ENCODE measurements at regions of chr16 and their contacts with region 1.

Region 1: DNA sequence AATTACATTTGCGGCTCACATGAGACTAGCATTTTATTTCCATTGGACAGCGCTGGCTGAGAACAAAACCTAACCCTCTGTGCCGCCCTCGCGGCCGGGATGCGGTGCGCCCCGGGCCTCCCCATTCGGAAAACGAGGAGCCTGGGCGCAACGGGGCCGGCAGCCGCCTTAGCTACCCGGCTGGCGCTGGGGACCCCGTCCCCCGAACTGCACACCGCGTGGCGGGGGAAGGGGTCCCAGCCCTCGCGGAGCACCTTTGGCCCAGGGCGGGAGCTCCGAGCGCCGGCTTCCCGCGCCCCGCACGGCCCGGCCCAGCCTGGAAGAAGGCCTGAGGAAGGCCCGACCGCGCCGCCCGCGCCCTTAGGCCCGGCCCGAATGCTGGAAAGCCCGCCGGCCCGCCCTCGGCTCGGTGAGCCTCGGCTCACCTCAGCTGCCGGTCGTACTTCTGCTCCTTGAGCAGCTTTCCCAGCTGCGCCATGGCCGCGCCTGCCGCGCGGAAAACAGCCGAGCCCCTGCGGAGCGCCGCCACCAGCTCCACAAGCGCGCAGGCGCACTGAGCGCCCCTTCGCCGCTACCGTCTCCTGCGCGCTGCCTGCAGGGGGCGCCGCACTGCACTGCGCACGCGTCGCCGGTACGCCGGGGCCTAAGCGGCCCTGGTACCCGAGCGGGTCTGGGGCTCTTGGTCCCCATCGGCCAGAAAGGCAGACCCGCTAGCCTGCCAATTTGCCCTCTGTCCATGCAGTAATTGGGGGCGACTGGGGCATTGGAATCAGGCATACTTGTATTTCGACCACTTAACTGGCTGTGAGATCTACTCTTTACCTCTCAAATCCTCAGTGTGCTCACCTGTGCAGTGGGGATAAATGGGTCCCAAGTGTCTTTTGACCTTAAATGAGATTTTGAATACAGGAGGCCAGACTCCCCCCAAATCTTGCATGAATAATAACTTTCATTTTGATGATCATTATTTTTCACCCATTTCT is at the start of gene NAE1:
- DNase-seq: peak; percentile 80 to 95 (median 90)
- ATAC-seq: peak; percentile 90 to 92
- H3K4me3 Mint-ChIP-seq: peak within 1 kb of the TSS; percentile 67 to 91 (median 79)
- H3K27ac Mint-ChIP-seq: peak within 1 kb of the TSS in 8 of 10 donors; percentile 47 to 88 (median 67)
- H3K4me1 Mint-ChIP-seq: peaks cover 17 to 34% (median 27%) of the 10 kb centered on the region in 4 donors
- H3K27me3 Mint-ChIP-seq: peaks cover 0 to 3% (median 0%) of the 10 kb centered on the region in 5 donors
- polyA plus RNA-seq, gene NAE1: 84.7 to 107 (median 95.7) TPM

Region 2: GRCh38 chr16:66869424-66869823 is 38.7 kb after region 1 on chr16:
- POLR2A ChIA-PET with region 1: interaction called, 25 read pairs
- DNase-seq: peak in 1 of 10 donors; percentile 21
- ATAC-seq: no peak
- H3K4me3 Mint-ChIP-seq: no peak overlapping the region
- H3K27ac Mint-ChIP-seq: no peak overlapping the region
- H3K4me1 Mint-ChIP-seq: peaks cover 11 to 22% (median 19%) of the 10 kb centered on the region in 4 donors
- H3K27me3 Mint-ChIP-seq: peaks cover 0 to 1% (median 0%) of the 10 kb centered on the region in 5 donors

Region 3: DNA sequence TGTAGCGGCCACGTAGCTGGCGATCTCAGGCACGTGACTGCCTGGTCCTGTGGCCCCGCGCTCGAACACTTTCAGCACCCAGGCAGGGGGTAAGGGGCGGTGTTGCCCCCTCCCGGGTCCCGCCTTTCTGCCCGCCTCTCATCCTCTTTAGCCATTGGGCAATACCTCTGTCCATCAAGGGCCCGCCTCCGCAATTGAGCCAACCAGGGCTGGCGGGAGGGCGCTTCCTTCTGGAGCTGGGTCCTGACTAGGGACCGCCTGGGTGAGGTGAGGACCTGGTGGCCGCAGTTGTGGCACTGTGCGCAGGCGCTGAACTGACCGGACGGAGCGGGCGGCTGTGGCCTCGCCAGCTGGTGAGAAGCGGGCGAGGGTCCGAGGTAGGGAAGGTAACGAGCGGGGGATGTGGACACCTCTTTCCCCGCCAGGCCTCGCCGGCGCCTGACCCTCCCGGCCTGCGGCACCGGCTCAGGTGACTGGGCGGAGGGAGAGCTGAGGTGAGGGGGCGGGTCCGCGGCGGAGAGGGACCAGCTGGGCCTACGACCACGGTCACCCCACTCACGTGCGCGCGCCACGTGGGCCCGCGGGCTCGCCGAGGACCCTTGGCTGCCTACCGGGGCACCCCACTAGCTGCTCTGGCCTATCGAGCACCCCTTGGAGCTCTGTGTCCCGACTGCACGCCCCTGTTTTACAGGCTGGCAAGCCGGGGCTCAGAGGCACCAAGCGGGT is 49.7 kb after region 1 on chr16 and contains the start of gene PDP2:
- POLR2A ChIA-PET with region 1: interaction called, 16 read pairs
- DNase-seq: peak; percentile 73 to 96 (median 88)
- ATAC-seq: peak; percentile 98
- H3K4me3 Mint-ChIP-seq: peak within 1 kb of the TSS; percentile 86 to 100 (median 99)
- H3K27ac Mint-ChIP-seq: peak within 1 kb of the TSS; percentile 78 to 97 (median 92)
- H3K4me1 Mint-ChIP-seq: peaks cover 16 to 35% (median 26%) of the 10 kb centered on the region in 4 donors
- H3K27me3 Mint-ChIP-seq: no peaks in the 10 kb centered on the region
- polyA plus RNA-seq, gene PDP2: 1.2 to 1.8 (median 1.7) TPM

Measured in naive thymus-derived CD8-positive, alpha-beta T cell (primary cell).